HCT116 (cell line): ENCODE measurements at regions of chr16 and their contacts with region 1.

Region 1: GRCh38 chr16:81873843-81874752 is 95.0 kb downstream of the PLCG2 start:
- DNase-seq: peak; percentile 57
- ATAC-seq: peak; percentile 98
- H3K4me3 ChIP-seq: no peak overlapping the region
- H3K27ac ChIP-seq: no peak overlapping the region
- H3K4me1 ChIP-seq: no peaks in the 10 kb centered on the region
- H3K27me3 ChIP-seq: no peaks in the 10 kb centered on the region
- CTCF ChIP-seq: peak; percentile 91 to 99 (median 97)
- POLR2A ChIP-seq: no peak
- RAD21 ChIP-seq: peak; percentile 81

Region 2: GRCh38 chr16:81623363-81624102 is 250.6 kb before region 1 on chr16:
- CTCF ChIA-PET with region 1: no interaction called
- POLR2A ChIA-PET with region 1: no interaction called
- RAD21 ChIA-PET with region 1: no interaction called
- intact Hi-C with region 1: loop called (anchors 10 kb)
- DNase-seq: peak; percentile 53
- ATAC-seq: peak; percentile 70
- H3K4me3 ChIP-seq: no peak overlapping the region
- H3K27ac ChIP-seq: no peak overlapping the region
- H3K4me1 ChIP-seq: peaks cover 5 to 35% of the 10 kb centered on the region in 2 experiments; a peak in 3 of 4 replicates
- H3K27me3 ChIP-seq: no peaks in the 10 kb centered on the region
- CTCF ChIP-seq: peak; percentile 72 to 95 (median 93)
- POLR2A ChIP-seq: no peak
- RAD21 ChIP-seq: peak; percentile 99

Region 3: GRCh38 chr16:81745704-81746558 is 128.2 kb before region 1 on chr16:
- CTCF ChIA-PET with region 1: interaction called, 6 read pairs
- POLR2A ChIA-PET with region 1: no interaction called
- RAD21 ChIA-PET with region 1: no interaction called
- intact Hi-C with region 1: loop called (anchors 5 kb)
- DNase-seq: peak; percentile 42
- ATAC-seq: peak; percentile 90
- H3K4me3 ChIP-seq: peak overlapping the region; percentile 57 to 58
- H3K27ac ChIP-seq: peak overlapping the region; percentile 30
- H3K4me1 ChIP-seq: peaks cover 4 to 22% of the 10 kb centered on the region in 2 experiments; a peak in 3 of 4 replicates
- H3K27me3 ChIP-seq: no peaks in the 10 kb centered on the region
- CTCF ChIP-seq: no peak
- POLR2A ChIP-seq: peak; percentile 78
- RAD21 ChIP-seq: no peak

Region 4: GRCh38 chr16:81778861-81779535 is 95.1 kb before region 1 on chr16 and contains the start of gene PLCG2:
- CTCF ChIA-PET with region 1: interaction called, 5 read pairs
- POLR2A ChIA-PET with region 1: no interaction called
- RAD21 ChIA-PET with region 1: no interaction called
- intact Hi-C with region 1: loop called (anchors 5 kb)
- DNase-seq: peak; percentile 47
- ATAC-seq: peak; percentile 93
- H3K4me3 ChIP-seq: peak within 1 kb of the TSS; percentile 72 to 93
- H3K27ac ChIP-seq: peak within 1 kb of the TSS; percentile 50; the same call in 1 of the 2 replicates
- H3K4me1 ChIP-seq: peaks cover 0 to 17% of the 10 kb centered on the region in 2 experiments; a peak in 3 of 4 replicates
- H3K27me3 ChIP-seq: no peaks in the 10 kb centered on the region
- CTCF ChIP-seq: no peak
- POLR2A ChIP-seq: peak; percentile 54
- RAD21 ChIP-seq: no peak
- total RNA-seq, gene PLCG2: 31.2 TPM

Region 5: DNA sequence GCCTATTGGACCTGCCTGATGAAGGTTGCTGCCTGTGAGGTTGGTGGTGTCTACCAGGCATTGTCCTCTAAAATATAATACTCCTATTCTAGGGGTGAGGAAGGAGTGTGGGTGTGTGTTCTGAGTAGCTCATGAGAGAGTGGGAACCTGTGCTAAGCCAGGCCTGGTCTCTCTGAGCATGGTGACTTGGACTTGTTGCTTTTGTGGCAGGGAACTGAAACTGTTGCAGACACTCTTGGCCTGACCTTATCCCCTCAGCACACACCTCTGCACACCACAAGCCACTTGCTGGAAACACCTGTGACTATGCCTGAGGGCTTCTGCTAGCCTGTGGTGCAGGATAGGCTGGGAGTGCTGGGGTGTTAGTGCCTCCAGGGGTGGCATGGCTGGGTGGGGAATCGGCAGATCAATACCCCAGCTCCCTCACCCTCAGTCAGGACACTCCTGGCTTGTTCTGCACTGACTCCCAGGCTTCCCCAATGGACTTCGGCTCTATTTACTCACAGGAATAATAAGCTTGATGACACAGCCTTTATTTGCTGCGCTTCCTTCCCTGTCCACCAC is 65.1 kb before region 1 on chr16:
- CTCF ChIA-PET with region 1: no interaction called
- POLR2A ChIA-PET with region 1: no interaction called
- RAD21 ChIA-PET with region 1: no interaction called
- intact Hi-C with region 1: no loop called
- DNase-seq: no peak
- ATAC-seq: peak; percentile 23; the same call in 1 of the 2 replicates
- H3K4me3 ChIP-seq: no peak overlapping the region
- H3K27ac ChIP-seq: no peak overlapping the region
- H3K4me1 ChIP-seq: no peaks in the 10 kb centered on the region
- H3K27me3 ChIP-seq: no peaks in the 10 kb centered on the region
- CTCF ChIP-seq: no peak
- POLR2A ChIP-seq: no peak
- RAD21 ChIP-seq: no peak

Region 6: GRCh38 chr16:81885976-81886586 is 12.0 kb after region 1 on chr16:
- CTCF ChIA-PET with region 1: interaction called, 39 read pairs
- POLR2A ChIA-PET with region 1: no interaction called
- RAD21 ChIA-PET with region 1: no interaction called
- intact Hi-C with region 1: no loop called
- DNase-seq: peak; percentile 40
- ATAC-seq: peak; percentile 89
- H3K4me3 ChIP-seq: no peak overlapping the region
- H3K27ac ChIP-seq: no peak overlapping the region
- H3K4me1 ChIP-seq: no peaks in the 10 kb centered on the region
- H3K27me3 ChIP-seq: no peaks in the 10 kb centered on the region
- CTCF ChIP-seq: peak; percentile 67 to 89 (median 87); a peak in 5 of 6 replicates
- POLR2A ChIP-seq: no peak
- RAD21 ChIP-seq: peak; percentile 68

Region 7: GRCh38 chr16:82317411-82318167 is 443.5 kb after region 1 on chr16:
- CTCF ChIA-PET with region 1: no interaction called
- POLR2A ChIA-PET with region 1: no interaction called
- RAD21 ChIA-PET with region 1: no interaction called
- intact Hi-C with region 1: no loop called
- DNase-seq: no peak
- ATAC-seq: no peak
- H3K4me3 ChIP-seq: no peak overlapping the region
- H3K27ac ChIP-seq: no peak overlapping the region
- H3K4me1 ChIP-seq: no peaks in the 10 kb centered on the region
- H3K27me3 ChIP-seq: no peaks in the 10 kb centered on the region
- CTCF ChIP-seq: no peak
- POLR2A ChIP-seq: no peak
- RAD21 ChIP-seq: no peak